Breast epithelium (tissue), 4 donors: ENCODE measurements at regions of chr14 and their contacts with region 1.

Region 1: GRCh38 chr14:95198320-95198719 is 41.0 kb upstream of the DICER1 start:
- DNase-seq: no peak
- H3K4me3 ChIP-seq: no peak overlapping the region
- H3K27ac ChIP-seq: peak overlapping the region in 1 of 2 donors; percentile 66
- H3K4me1 ChIP-seq: no peaks in the 10 kb centered on the region
- H3K27me3 ChIP-seq: no peaks in the 10 kb centered on the region
- CTCF ChIP-seq: no peak
- POLR2A ChIP-seq: no peak

Region 2: GRCh38 chr14:95128140-95128539 is 70.2 kb before region 1 on chr14:
- intact Hi-C with region 1: loop called (anchors 2 kb)
- DNase-seq: no peak
- H3K4me3 ChIP-seq: no peak overlapping the region
- H3K27ac ChIP-seq: no peak overlapping the region
- H3K4me1 ChIP-seq: no peaks in the 10 kb centered on the region
- H3K27me3 ChIP-seq: no peaks in the 10 kb centered on the region
- CTCF ChIP-seq: no peak
- POLR2A ChIP-seq: no peak